ENCODE measurements at regions of chr5 and their contacts with region 1.

Region 1: GRCh38 chr5:147857302-147858129 is 21.0 kb upstream of the SCGB3A2 start:
- DNase-seq: peak; percentile 44
- ATAC-seq: peak; percentile 60; the same call in 2 of the 3 replicates
- H3K4me3 ChIP-seq: no peak overlapping the region
- H3K27ac ChIP-seq: no peak overlapping the region
- H3K4me1 ChIP-seq: no peaks in the 10 kb centered on the region
- H3K27me3 ChIP-seq: no peaks in the 10 kb centered on the region
- CTCF ChIP-seq: peak; percentile 73
- EP300 ChIP-seq: no peak
- POLR2A ChIP-seq: no peak
- RAD21 ChIP-seq: no peak

Region 2: DNA sequence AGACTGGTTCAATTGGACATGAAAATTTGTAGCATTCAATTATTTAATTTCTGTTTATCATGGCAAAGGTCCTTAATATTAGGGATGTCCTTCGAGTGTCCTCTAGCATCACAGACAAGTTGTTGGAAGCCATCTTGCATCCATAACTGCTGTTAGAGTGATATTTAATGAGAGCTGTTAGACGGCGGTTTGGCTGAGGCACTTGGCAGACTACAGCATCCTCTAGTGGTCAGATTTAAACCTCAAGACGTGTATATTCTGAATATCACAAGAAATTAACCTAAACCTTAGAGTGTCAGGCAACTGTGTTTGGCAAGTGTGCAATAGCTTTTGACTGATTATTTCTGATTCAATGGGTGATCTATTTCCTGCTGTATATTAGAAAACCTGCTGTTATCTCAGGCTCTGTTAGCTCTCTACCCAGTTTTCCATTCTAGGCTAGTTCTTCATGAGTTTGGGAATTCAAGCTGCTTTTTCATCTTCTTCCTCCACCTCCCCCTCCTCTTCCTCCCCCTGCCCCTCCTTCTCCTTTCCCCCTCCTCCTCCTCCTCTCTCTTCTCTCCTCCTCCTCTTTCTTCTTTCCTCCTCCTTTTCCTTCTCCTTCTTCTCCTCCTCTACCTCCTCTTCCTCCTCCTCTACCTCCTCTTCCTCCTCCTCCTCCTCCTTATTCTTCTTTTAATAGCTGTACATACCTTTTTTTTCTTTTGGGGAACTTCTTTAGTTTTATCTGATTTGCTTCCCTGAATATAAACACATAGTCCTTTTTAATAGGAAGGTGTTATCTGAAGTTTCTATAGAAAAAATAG is 34.6 kb before region 1 on chr5:
- CTCF ChIA-PET with region 1: interaction called, 7 read pairs
- POLR2A ChIA-PET with region 1: no interaction called
- in situ Hi-C with region 1: no loop called
- intact Hi-C with region 1: loop called (anchors 5 kb)
- DNase-seq: peak; percentile 17
- ATAC-seq: peak; percentile 82
- H3K4me3 ChIP-seq: no peak overlapping the region
- H3K27ac ChIP-seq: no peak overlapping the region
- H3K4me1 ChIP-seq: peaks cover 10% of the 10 kb centered on the region; the same call in 1 of the 2 replicates
- H3K27me3 ChIP-seq: no peaks in the 10 kb centered on the region
- CTCF ChIP-seq: peak; percentile 79
- EP300 ChIP-seq: no peak
- POLR2A ChIP-seq: no peak
- RAD21 ChIP-seq: peak; percentile 64

Region 3: GRCh38 chr5:147935032-147935431 is 77.5 kb after region 1 on chr5:
- CTCF ChIA-PET with region 1: interaction called, 3 read pairs
- POLR2A ChIA-PET with region 1: no interaction called
- in situ Hi-C with region 1: loop called (anchors 5 kb)
- intact Hi-C with region 1: loop called (anchors 1 kb)
- DNase-seq: peak; percentile 16
- ATAC-seq: no peak
- H3K4me3 ChIP-seq: no peak overlapping the region
- H3K27ac ChIP-seq: no peak overlapping the region
- H3K4me1 ChIP-seq: no peaks in the 10 kb centered on the region
- H3K27me3 ChIP-seq: no peaks in the 10 kb centered on the region
- CTCF ChIP-seq: peak; percentile 23; the same call in 1 of the 2 replicates
- EP300 ChIP-seq: no peak
- POLR2A ChIP-seq: no peak
- RAD21 ChIP-seq: no peak

Region 4: DNA sequence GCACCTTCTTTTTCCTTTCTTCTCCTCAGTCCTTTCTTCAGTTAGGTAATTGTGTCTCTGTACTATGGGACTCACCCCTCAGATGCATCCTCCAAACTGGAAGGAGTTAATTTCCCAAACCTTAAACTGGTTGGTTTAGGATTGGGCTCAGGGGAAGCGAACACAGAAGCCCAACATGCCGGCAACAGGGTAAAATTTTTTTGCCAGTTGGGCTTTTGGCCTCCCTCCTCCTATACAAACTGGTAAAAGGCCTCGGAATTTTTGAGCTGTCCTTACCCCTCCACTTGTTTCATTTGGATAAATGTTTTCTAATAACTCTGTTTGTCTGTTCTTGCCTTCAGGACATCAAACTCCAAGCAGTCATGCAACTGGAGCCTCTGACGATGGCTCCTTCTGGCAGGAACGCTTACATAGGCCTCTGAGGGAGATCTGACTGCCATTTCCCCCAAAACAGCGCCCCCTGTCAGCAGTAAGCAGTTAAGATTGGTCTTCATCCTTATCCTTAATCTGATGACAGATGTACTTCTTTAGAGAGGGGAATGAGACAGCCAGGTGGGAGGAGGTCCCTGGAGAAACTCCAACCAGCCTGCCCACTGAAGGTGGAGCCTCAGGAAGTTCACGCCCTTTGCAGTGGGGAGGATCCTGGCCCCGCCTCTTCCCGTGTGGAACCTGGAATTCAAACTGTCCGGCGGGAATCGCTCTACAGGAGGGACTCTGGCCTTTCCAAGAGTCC is 148.4 kb after region 1 on chr5:
- CTCF ChIA-PET with region 1: no interaction called
- POLR2A ChIA-PET with region 1: no interaction called
- in situ Hi-C with region 1: no loop called
- intact Hi-C with region 1: loop called (anchors 5 kb)
- DNase-seq: peak; percentile 2
- ATAC-seq: no peak
- H3K4me3 ChIP-seq: no peak overlapping the region
- H3K27ac ChIP-seq: no peak overlapping the region
- H3K4me1 ChIP-seq: no peaks in the 10 kb centered on the region
- H3K27me3 ChIP-seq: no peaks in the 10 kb centered on the region
- CTCF ChIP-seq: peak; percentile 25; the same call in 1 of the 2 replicates
- EP300 ChIP-seq: no peak
- POLR2A ChIP-seq: no peak
- RAD21 ChIP-seq: no peak

Region 5: DNA sequence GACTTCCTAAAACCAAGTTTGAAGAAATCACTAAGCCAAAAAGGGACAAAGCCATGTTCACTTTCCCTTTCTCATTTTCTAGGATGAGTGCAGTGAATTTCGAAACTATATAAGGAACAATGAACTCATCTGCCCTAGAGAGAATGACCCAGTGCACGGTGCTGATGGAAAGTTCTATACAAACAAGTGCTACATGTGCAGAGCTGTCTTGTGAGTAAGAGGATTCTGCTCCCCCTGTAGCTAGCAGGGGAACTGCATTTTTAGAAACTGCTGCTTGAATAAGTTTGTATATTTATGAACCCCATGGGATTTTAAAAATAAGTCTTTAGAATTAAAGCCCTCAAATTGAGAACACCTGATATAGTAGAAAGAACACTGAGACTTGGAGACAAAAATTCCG is 268.1 kb after region 1 on chr5:
- CTCF ChIA-PET with region 1: no interaction called
- POLR2A ChIA-PET with region 1: no interaction called
- in situ Hi-C with region 1: no loop called
- intact Hi-C with region 1: loop called (anchors 10 kb)
- DNase-seq: peak; percentile 8
- ATAC-seq: peak; percentile 54; the same call in 1 of the 3 replicates
- H3K4me3 ChIP-seq: no peak overlapping the region
- H3K27ac ChIP-seq: no peak overlapping the region
- H3K4me1 ChIP-seq: peaks cover 1% of the 10 kb centered on the region; the same call in 1 of the 2 replicates
- H3K27me3 ChIP-seq: no peaks in the 10 kb centered on the region
- CTCF ChIP-seq: no peak
- EP300 ChIP-seq: no peak
- POLR2A ChIP-seq: no peak
- RAD21 ChIP-seq: no peak